ENCODE measurements at regions of chr5 and their contacts with region 1.

Region 1: DNA sequence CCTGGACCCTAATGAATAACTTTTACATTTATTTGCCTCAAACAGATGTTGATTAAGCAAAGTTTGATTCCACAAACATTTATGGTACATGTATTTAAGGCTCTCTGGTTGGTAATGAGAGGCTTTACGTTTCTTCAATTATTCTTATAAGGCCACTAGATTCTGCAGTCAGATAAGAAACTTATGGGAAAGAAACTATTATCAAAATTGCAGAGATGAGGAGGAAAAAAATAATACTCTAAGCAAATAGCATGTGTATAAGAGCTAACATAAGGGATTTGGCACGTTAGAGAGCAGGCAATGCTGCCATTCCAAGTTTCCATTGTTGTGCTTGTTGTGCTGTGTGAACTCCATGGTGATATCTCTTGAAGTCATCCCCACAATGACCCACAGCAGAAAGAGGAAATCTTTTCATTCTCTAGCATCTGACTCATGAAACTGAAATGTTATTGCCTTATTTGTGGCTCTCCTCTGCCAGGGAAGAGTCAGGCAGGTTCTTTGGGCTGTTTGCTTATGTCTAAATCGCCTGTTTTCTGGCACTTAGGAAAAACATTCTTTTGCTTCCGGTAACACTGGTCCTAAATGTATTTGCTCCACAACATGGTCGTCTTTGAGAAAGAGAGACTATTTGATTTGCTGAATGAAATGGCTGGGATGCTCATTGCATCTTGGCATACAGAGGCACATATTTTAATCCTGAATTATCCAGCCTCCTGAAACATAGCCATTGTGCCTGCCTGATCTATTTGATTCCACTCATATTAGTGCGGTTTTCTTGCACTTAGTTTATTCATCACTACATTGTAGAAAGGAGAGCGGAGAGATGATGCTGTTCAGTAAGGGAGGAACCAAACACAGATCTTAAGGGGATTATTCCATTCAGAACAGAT is 188.7 kb downstream of the CSNK1G3 start:
- DNase-seq: no peak

Region 2: DNA sequence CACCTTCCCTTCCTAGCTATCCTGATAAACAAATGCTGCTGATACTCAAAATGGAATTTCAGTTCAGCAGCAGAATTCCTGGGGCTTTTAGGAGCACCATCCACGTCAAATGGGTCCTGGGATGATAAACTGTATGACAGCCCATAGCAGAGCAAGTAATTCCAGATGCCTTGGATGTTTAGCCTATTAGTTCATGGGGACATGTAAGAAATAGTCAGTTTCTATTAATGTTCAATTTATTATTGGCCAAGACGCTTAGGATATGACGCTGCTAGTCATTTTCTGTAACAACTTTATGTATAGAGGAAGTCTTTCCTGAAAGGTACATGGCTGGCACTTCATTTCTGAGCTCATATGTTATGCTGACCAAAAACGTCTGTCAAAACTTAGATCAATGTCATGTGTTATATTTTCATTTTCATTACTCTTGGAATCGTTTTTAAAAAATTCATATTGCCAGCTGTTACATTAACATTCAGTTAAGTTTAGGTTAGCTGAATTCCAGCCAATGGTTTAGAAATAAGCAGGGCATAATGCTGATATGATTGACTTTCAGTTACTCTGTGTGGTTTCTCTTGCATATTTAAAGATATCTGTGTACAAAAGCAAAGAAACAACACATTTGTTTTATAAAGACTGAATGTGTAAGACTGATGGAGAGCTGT is 55.1 kb after region 1 on chr5:
- intact Hi-C with region 1: loop called (anchors 2 kb)
- DNase-seq: no peak

Region 3: GRCh38 chr5:123813937-123814624 is 113.4 kb after region 1 on chr5:
- intact Hi-C with region 1: loop called (anchors 2 kb)
- DNase-seq: no peak

Region 4: GRCh38 chr5:123916331-123917121 is 215.9 kb after region 1 on chr5:
- intact Hi-C with region 1: loop called (anchors 10 kb)
- DNase-seq: no peak

Measured in cardiac septum (tissue), 1 donor.